HCT116 (cell line): ENCODE measurements at regions of chr9 and their contacts with region 1.

Region 1: DNA sequence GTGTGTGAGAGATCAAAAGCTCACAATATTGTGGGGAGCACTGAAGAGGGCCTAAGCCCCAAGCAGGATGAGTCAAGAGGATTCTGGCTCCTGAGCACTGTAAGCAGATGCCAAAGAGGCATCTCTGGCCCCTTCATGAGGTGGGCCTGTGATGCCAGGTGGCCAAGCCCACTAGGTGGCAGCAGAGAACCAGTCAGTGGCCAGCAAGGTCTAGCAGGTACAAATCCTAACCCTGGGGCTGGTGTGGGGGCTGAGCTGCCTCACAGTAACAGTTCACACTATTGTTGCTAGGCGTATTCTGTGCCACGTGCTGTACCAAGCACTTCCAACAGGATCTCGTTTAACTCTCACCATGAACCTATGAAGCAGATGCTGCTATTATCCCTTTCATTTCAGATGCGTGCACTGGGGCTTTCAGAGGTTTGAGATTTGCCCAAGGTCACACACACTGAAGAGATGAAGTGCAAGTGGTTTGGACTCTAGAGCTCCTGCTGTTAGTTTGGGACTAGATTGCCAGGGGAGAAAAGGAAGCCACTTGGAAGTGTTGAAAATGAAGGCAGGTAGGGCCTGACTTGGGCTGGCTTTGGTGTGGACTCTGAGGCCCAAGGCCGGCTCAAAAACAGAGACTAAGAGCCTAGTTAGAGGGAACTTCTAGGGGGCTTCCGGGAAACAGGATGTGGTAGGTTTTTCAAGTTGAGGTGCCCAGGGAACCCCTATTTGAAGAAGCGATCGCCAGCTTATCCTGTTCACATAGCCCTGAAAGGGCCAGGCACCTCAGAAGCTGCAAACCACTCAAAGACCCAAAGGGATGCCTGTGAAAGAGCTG is 4.4 kb upstream of the MLANA start:
- DNase-seq: peak; percentile 48
- ATAC-seq: peak; percentile 99
- H3K4me3 ChIP-seq: no peak overlapping the region
- H3K27ac ChIP-seq: no peak overlapping the region
- H3K4me1 ChIP-seq: peaks cover 0 to 14% of the 10 kb centered on the region in 2 experiments; a peak in 2 of 4 replicates
- H3K27me3 ChIP-seq: no peaks in the 10 kb centered on the region
- CTCF ChIP-seq: peak; percentile 84 to 96 (median 95); a peak in 5 of 6 replicates
- POLR2A ChIP-seq: no peak
- RAD21 ChIP-seq: peak; percentile 93

Region 2: GRCh38 chr9:6008169-6008979 is 122.0 kb after region 1 on chr9:
- CTCF ChIA-PET with region 1: no interaction called
- POLR2A ChIA-PET with region 1: no interaction called
- RAD21 ChIA-PET with region 1: no interaction called
- intact Hi-C with region 1: loop called (anchors 5 kb)
- DNase-seq: peak; percentile 98
- ATAC-seq: peak; percentile 74
- H3K4me3 ChIP-seq: peak overlapping the region; percentile 70 to 79
- H3K27ac ChIP-seq: peak overlapping the region; percentile 85
- H3K4me1 ChIP-seq: peaks cover 13 to 17% of the 10 kb centered on the region in 2 experiments; a peak in 3 of 4 replicates
- H3K27me3 ChIP-seq: no peaks in the 10 kb centered on the region
- CTCF ChIP-seq: no peak
- POLR2A ChIP-seq: no peak
- RAD21 ChIP-seq: no peak

Region 3: GRCh38 chr9:6049798-6050197 is 163.5 kb after region 1 on chr9:
- CTCF ChIA-PET with region 1: interaction called, 52 read pairs
- POLR2A ChIA-PET with region 1: no interaction called
- RAD21 ChIA-PET with region 1: interaction called, 3 to 13 read pairs
- intact Hi-C with region 1: loop called (anchors 1 kb)
- DNase-seq: peak; percentile 35
- ATAC-seq: peak; percentile 62; the same call in 1 of the 2 replicates
- H3K4me3 ChIP-seq: no peak overlapping the region
- H3K27ac ChIP-seq: no peak overlapping the region
- H3K4me1 ChIP-seq: no peaks in the 10 kb centered on the region
- H3K27me3 ChIP-seq: no peaks in the 10 kb centered on the region
- CTCF ChIP-seq: peak; percentile 41 to 67 (median 62); a peak in 4 of 6 replicates
- POLR2A ChIP-seq: no peak
- RAD21 ChIP-seq: peak; percentile 61

Region 4: GRCh38 chr9:6305954-6306563 is 419.7 kb after region 1 on chr9:
- CTCF ChIA-PET with region 1: interaction called, 12 read pairs
- POLR2A ChIA-PET with region 1: no interaction called
- RAD21 ChIA-PET with region 1: no interaction called
- intact Hi-C with region 1: loop called (anchors 2 kb)
- DNase-seq: peak; percentile 32
- ATAC-seq: peak; percentile 78
- H3K4me3 ChIP-seq: no peak overlapping the region
- H3K27ac ChIP-seq: no peak overlapping the region
- H3K4me1 ChIP-seq: peaks cover 3 to 6% of the 10 kb centered on the region in 2 experiments; a peak in 1 of 4 replicates
- H3K27me3 ChIP-seq: no peaks in the 10 kb centered on the region
- CTCF ChIP-seq: peak; percentile 48 to 81 (median 69)
- POLR2A ChIP-seq: no peak
- RAD21 ChIP-seq: peak; percentile 89

Region 5: GRCh38 chr9:6566409-6567139 is 680.2 kb after region 1 on chr9:
- CTCF ChIA-PET with region 1: no interaction called
- POLR2A ChIA-PET with region 1: no interaction called
- RAD21 ChIA-PET with region 1: no interaction called
- intact Hi-C with region 1: loop called (anchors 10 kb)
- DNase-seq: peak; percentile 95
- ATAC-seq: peak; percentile 85
- H3K4me3 ChIP-seq: peak overlapping the region; percentile 24 to 28
- H3K27ac ChIP-seq: peak overlapping the region; percentile 93
- H3K4me1 ChIP-seq: peaks cover 33 to 56% of the 10 kb centered on the region in 2 experiments
- H3K27me3 ChIP-seq: no peaks in the 10 kb centered on the region
- CTCF ChIP-seq: no peak
- POLR2A ChIP-seq: no peak
- RAD21 ChIP-seq: no peak